OCI-LY7 (cell line): ENCODE measurements at regions of chr17 and their contacts with region 1.

Region 1: GRCh38 chr17:38752119-38752929 is at the start of gene PSMB3:
- DNase-seq: peak; percentile 100
- H3K4me3 ChIP-seq: peak within 1 kb of the TSS; percentile 79
- H3K27ac ChIP-seq: peak within 1 kb of the TSS; percentile 76
- H3K4me1 ChIP-seq: peaks cover 40% of the 10 kb centered on the region
- CTCF ChIP-seq: no peak
- total RNA-seq, gene PSMB3: 290 and 348 TPM in 2 replicates

Region 2: GRCh38 chr17:38729886-38730525 is 22.3 kb before region 1 on chr17 and contains the start of gene CISD3:
- CTCF ChIA-PET with region 1: no interaction called
- POLR2A ChIA-PET with region 1: no interaction called
- intact Hi-C with region 1: loop called (anchors 1 kb)
- DNase-seq: peak; percentile 95
- H3K4me3 ChIP-seq: peak within 1 kb of the TSS; percentile 82
- H3K27ac ChIP-seq: peak within 1 kb of the TSS; percentile 39
- H3K4me1 ChIP-seq: peaks cover 80% of the 10 kb centered on the region
- CTCF ChIP-seq: peak; percentile 75
- total RNA-seq, gene CISD3: 11.4 and 13.4 TPM in 2 replicates

Region 3: GRCh38 chr17:38853292-38854219 is 101.2 kb after region 1 on chr17 and contains the start of gene RPL23:
- CTCF ChIA-PET with region 1: no interaction called
- POLR2A ChIA-PET with region 1: interaction called, 4 read pairs
- intact Hi-C with region 1: loop called (anchors 5 kb)
- DNase-seq: peak; percentile 99
- H3K4me3 ChIP-seq: peak within 1 kb of the TSS; percentile 87
- H3K27ac ChIP-seq: peak within 1 kb of the TSS; percentile 96
- H3K4me1 ChIP-seq: peaks cover 42% of the 10 kb centered on the region
- CTCF ChIP-seq: no peak
- total RNA-seq, gene RPL23: 1,289 and 1,881 TPM in 2 replicates